GM13976 (cell line): ENCODE measurements at regions of chr11 and their contacts with region 1.

Region 1: DNA sequence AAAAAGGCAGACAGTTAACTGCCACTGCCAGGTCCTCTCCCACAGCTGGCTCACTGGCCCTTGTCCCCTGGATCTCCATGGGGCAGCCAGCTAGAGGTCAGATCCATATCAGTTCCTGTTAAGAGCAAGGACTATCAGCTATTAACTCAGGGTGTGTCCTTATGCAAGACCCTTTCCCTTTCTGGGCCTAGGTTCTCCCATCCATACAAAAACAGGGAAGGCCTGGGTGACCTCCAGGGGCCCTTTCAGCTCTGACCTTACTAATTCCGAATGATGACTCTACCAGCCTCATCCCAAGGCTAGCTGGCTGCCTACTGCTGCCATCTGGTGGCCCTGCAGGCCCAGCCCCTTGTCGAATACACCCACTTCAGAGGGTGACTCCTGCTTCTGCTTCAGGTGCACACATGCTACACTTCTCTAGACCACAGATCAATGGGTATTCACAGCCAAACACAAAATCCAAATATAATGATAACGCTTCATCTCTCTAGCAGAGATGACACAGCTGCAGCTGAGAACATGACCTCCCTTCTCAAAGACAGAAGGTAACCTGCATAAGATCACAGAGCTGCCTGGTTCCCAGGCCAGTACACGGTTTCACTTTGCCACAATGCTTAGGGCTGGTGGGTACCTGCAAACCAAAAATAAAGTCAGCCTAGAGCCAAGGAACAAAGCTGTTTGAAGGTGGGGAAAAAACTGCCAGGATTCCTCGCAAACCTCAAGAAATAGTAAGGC is 34.1 kb downstream of the SERGEF start:
- DNase-seq: peak; percentile 46
- CTCF ChIP-seq: peak; percentile 61

Region 2: GRCh38 chr11:17598700-17599459 is 379.8 kb before region 1 on chr11:
- in situ Hi-C with region 1: loop called (anchors 10 kb)
- DNase-seq: peak; percentile 85
- CTCF ChIP-seq: peak; percentile 96

Region 3: DNA sequence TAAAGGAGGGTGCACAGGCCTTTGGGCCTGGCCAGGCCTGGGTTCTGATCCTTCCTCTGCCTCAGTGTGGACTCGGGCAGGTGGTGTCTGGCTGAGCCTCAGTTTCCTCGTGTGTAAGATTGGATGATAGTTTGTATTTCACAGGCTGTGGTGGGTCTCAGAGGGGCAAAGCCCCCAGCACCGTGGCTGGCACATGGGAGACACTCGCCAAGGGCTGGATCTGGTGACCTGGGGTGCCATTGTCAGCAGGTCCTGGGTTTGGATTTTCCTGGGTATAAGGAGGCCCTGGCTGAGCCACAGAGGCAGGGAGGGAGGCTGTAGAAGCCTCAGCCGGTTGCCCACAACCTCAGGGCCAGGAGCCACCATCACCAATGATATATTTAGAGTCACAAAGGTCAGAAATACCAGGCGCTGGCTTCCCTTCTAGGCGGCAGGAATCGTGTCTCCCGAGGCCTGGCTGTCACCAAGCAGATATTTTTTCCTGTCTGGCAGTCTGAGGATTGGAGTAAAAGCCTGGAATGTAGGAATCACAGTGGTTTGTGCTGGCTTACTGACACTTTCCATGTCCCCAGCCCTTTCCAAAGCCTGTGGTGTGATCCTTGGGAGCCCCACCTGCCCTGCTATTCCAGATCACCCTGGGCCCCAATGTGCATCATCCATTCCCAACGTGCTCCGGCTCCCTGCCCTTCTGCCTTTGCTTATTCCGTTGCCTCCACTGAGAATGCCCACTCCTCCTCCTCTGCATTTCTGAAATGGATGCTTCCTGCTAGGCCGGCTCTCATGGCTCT is 228.5 kb before region 1 on chr11:
- in situ Hi-C with region 1: loop called (anchors 10 kb)
- DNase-seq: no peak
- CTCF ChIP-seq: no peak

Region 4: DNA sequence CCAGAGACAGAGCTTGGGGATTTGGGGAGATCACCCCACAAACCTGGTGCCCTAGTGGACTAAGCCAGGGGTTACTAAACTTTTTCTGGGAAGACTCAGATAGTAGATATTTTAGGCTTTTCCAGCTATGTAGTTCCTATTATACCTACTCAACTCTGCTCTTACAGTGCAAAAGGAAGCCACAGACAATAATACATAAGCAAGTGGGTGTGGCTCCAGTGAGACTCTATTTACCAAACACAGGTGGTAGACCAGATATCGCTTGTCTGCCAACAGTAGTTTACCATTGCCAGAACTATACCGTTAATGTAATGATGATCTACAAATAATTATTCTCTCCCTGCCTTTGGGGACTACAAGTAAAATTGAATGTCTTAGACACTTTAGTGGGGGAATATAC is 440.3 kb after region 1 on chr11:
- in situ Hi-C with region 1: no loop called
- DNase-seq: no peak
- CTCF ChIP-seq: no peak

Region 5: DNA sequence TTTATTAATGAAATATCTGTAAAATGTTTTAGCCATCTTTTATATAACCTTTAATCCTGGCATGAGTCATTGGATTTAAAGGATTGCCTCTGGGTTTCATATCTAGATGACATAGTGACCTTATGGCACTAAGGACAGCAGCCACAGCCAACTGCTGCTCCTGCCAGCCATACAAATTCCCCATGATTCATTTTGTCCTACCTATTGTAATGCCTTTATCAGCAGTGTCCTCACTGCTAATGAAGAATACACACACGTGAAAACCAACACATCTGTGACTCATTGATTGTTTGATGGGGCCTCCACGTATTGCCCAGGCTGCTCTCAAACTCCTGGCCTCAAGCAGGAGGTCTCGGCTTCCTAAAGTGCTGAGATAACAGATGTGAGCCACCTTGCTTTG is 478.7 kb after region 1 on chr11:
- in situ Hi-C with region 1: no loop called
- DNase-seq: no peak
- CTCF ChIP-seq: no peak